ENCODE measurements at regions of chr15 and their contacts with region 1.

Region 1: DNA sequence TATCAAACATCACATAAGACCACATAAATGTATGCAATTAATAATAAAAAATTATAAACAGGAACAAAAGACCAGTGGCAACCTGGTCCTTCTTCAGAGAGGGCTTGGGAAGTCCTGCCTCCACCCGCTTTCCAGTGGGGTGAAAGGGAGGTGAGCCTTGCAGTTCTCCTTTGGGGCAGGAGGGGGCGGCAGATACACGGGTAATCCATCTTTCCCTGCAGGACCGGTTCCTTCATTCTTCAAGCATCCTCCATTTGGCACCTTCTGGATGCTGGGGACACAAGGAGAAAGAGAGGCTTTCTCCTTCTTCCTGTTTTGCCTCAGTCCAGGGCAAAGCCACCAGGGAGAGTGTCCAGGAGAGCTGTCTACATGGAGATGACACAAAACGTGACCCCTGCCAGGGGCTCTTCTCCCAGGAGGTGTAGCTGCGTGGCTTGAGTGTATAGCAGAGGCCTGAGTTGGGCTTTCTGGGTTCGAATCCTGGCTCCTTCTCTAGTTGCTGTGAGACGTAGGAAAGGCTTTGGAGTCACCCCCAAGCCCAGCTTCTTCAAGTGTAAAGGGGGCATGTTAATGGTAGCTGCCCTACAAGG is 23.2 kb downstream of the RPLP1 start:
- DNase-seq: peak; percentile 74 to 87
- H3K4me3 ChIP-seq: no peak overlapping the region
- H3K4me3 Mint-ChIP-seq: no peak overlapping the region
- H3K27ac Mint-ChIP-seq: no peak overlapping the region
- H3K4me1 ChIP-seq: no peaks in the 10 kb centered on the region
- H3K4me1 Mint-ChIP-seq: no peaks in the 10 kb centered on the region
- H3K27me3 ChIP-seq: no peaks in the 10 kb centered on the region
- H3K27me3 Mint-ChIP-seq: peaks cover 2% of the 10 kb centered on the region
- CTCF ChIP-seq: peak; percentile 89 to 93

Region 2: DNA sequence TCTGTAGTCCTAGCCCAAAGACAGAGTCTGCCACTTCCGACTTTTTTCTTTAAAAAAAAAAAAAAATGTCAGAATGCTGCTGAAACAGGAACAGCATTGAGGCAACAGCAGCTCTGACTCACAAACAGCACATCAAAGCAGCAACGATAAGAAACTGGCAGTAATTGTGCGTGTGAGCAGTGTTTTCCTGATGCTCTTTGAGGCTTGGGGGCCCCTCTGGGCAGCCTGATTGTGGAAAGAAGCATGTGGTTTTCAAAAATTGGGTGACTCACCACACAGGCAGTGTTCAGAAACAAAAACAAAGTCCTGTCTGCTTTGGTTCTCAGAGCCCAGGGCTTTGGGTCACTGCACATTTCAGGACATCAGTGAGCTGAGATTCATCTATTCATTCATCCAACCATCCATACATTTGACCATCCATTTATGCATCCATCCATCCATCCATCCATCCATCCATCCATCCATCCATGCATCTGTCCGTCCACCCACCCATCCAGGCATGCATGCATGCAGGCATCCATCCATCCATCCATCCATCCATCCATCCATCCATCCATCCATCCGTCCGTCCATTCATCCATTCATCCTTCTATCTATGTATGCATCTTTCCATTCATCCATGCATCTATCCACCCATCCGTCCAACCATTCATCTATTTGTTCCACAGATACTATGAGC is 285.2 kb after region 1 on chr15:
- CTCF ChIA-PET with region 1: no interaction called
- POLR2A ChIA-PET with region 1: no interaction called
- intact Hi-C with region 1: loop called (anchors 10 kb)
- DNase-seq: peak; percentile 32 to 48
- H3K4me3 ChIP-seq: no peak overlapping the region
- H3K4me3 Mint-ChIP-seq: no peak overlapping the region
- H3K27ac Mint-ChIP-seq: no peak overlapping the region
- H3K4me1 ChIP-seq: 0 out of 2 replicates have a peak, but pooled peaks cover 7% of the 10 kb centered on the region
- H3K4me1 Mint-ChIP-seq: peaks cover 16% of the 10 kb centered on the region
- H3K27me3 ChIP-seq: no peaks in the 10 kb centered on the region
- H3K27me3 Mint-ChIP-seq: peaks cover 2% of the 10 kb centered on the region
- CTCF ChIP-seq: no peak

Region 3: DNA sequence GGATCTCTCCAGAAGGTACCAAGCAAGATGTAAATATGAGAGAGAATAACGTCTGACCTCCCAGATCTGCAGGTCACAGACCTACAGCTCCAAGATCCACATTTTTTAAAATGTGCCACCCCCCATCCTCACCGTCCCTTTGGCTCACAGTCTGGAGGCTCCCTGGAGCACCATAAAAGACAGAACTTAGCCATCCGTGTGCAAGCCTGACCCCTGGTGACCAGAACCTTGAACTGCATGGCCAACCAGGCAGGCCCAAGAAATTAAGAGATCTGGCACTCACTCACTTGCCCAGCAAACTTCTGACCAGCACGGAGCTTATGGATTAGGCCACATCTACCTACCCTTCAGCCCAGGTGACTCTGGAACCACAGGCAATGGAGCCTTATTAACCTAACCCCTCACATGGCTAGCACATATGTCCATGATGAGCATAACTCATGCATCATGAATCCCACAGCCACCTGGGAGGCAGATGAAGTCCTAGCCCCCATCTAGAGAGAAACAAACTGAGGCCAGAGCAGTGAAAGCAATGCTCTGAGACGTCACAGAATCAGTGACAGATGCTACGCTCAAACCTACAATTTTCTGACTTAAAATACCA is 1012.2 kb after region 1 on chr15:
- CTCF ChIA-PET with region 1: no interaction called
- POLR2A ChIA-PET with region 1: no interaction called
- intact Hi-C with region 1: loop called (anchors 5 kb)
- DNase-seq: peak; percentile 58 to 75
- H3K4me3 ChIP-seq: no peak overlapping the region
- H3K4me3 Mint-ChIP-seq: no peak overlapping the region
- H3K27ac Mint-ChIP-seq: no peak overlapping the region
- H3K4me1 ChIP-seq: peaks cover 8% of the 10 kb centered on the region
- H3K4me1 Mint-ChIP-seq: peaks cover 15% of the 10 kb centered on the region
- H3K27me3 ChIP-seq: no peaks in the 10 kb centered on the region
- H3K27me3 Mint-ChIP-seq: no peaks in the 10 kb centered on the region
- CTCF ChIP-seq: peak; percentile 85

Measured in Caco-2 (cell line).